ENCODE measurements at regions of chr16 and their contacts with region 1.

Region 1: DNA sequence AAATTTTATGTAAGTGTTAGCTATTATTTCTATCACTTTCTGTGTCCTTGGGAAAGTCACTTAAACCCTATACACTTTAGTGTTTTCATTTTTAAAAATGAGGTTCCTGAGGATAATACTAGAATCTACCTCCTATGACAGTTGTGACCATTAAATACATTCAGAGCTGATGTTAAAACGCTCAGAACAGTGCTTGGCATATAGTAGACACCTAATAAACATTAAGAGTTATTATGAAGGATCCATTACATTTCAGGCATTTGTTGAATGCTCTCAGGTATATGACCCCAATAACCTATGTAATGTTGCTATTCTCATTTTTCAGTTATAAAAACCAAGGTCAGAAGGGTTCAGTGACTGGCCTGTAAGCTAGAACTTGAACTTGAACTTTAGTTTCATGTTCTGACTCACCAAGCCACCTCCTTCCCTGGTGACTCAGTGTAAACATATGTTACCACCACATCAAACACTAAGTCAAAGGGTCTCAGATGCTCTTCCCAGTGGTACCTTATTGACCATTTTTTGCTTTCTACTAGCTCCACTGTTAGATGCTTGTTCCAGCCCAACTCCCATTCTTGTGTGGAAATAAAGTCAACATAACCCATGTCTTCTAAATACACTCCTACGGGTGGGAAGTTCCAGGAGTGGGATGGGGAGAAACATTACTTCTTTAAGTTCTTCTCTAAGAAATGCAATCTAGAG is 47.6 kb downstream of the HSD17B2 start:
- DNase-seq: no peak
- H3K4me3 ChIP-seq: no peak overlapping the region
- H3K27ac ChIP-seq: no peak overlapping the region
- H3K4me1 ChIP-seq: no peaks in the 10 kb centered on the region
- H3K27me3 ChIP-seq: no peaks in the 10 kb centered on the region
- CTCF ChIP-seq: no peak
- EP300 ChIP-seq: no peak
- POLR2A ChIP-seq: no peak

Region 2: DNA sequence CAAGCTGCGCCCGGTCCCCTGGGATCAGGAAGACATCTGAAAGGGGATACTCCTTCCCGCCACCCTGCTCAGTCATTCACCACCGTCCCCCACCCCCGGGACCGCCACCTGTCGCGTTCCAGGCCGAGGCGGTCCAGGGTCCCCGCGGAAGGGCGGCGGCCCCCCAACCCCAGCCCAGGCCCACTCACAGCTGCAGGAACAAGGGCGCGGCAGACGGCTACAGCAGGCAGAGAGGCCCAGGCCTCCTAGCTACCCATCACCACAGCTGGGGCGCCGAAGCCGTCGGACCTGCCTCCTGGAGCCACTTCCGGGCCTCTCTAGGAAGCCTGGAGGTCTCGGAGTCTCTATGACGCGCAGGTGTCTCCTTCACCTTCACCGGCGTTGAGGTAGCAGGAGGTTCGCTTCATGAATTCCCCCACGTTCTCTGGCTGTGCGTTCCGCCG is 71.5 kb before region 1 on chr16 and contains the start of gene SDR42E1:
- intact Hi-C with region 1: no loop called
- DNase-seq: peak in 1 of 5 donors; percentile 14
- H3K4me3 ChIP-seq: peak within 1 kb of the TSS; percentile 45
- H3K27ac ChIP-seq: no peak within 1 kb of the TSS
- H3K4me1 ChIP-seq: no peaks in the 10 kb centered on the region
- H3K27me3 ChIP-seq: no peaks in the 10 kb centered on the region
- CTCF ChIP-seq: no peak
- EP300 ChIP-seq: no peak
- POLR2A ChIP-seq: no peak
- total RNA-seq, gene SDR42E1: 0.13 to 2.3 (median 0.67) TPM

Region 3: DNA sequence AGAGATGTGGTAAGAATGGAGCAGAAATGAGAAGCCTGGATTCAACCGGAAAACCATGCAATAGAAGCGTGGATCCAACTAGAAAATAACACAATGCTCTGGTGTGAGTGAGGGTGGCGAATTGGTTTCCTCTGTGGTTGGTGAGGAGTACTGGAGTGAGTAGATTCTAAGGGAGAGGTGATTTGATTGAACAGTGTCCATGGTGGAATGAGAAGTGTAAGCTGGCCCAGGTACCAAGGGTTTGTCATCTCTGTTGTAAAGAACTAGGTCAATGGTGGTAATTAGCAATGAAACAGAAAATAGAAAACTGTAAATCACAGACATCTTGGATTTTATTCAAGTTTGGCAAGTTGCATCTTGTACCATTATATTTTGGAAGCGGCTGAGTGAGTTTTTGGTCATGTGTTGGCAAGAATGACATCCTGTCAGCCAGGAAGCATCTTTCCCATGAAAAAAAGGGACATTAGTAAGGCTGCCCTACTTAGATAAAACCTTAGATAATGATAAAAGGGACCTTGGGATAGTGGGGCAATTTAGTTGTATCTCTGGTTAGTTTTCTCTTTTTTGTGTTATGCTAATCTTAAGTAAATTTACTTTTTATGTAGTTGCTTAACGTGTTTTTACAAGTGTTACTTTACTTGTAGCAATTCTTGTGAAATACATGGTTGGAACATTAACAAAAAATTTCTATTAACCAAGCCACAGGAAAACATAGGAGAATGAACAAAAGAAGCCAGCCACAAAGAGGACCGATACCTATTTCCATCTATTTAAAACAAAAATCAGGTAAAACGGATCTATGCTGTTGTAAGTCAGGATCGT is 26.8 kb before region 1 on chr16:
- intact Hi-C with region 1: no loop called
- DNase-seq: no peak
- H3K4me3 ChIP-seq: no peak overlapping the region
- H3K27ac ChIP-seq: no peak overlapping the region
- H3K4me1 ChIP-seq: no peaks in the 10 kb centered on the region
- H3K27me3 ChIP-seq: no peaks in the 10 kb centered on the region
- CTCF ChIP-seq: no peak
- EP300 ChIP-seq: no peak
- POLR2A ChIP-seq: no peak

Region 4: GRCh38 chr16:82152196-82153112 is 69.8 kb after region 1 on chr16:
- intact Hi-C with region 1: no loop called
- DNase-seq: no peak
- H3K4me3 ChIP-seq: no peak overlapping the region
- H3K27ac ChIP-seq: no peak overlapping the region
- H3K4me1 ChIP-seq: peaks cover under 1% of the 10 kb centered on the region
- H3K27me3 ChIP-seq: no peaks in the 10 kb centered on the region
- CTCF ChIP-seq: no peak
- EP300 ChIP-seq: no peak
- POLR2A ChIP-seq: no peak

Region 5: GRCh38 chr16:83581082-83581481 is 1498.4 kb after region 1 on chr16:
- intact Hi-C with region 1: loop called in 1 of 4 experiments (anchors 10 kb)
- DNase-seq: no peak
- H3K4me3 ChIP-seq: no peak overlapping the region
- H3K27ac ChIP-seq: no peak overlapping the region
- H3K4me1 ChIP-seq: no peaks in the 10 kb centered on the region
- H3K27me3 ChIP-seq: no peaks in the 10 kb centered on the region
- CTCF ChIP-seq: no peak
- EP300 ChIP-seq: no peak
- POLR2A ChIP-seq: no peak

Measured in ovary (tissue), 10 donors.